Calu3 (cell line): ENCODE measurements at regions of chr2 and their contacts with region 1.

Region 1: DNA sequence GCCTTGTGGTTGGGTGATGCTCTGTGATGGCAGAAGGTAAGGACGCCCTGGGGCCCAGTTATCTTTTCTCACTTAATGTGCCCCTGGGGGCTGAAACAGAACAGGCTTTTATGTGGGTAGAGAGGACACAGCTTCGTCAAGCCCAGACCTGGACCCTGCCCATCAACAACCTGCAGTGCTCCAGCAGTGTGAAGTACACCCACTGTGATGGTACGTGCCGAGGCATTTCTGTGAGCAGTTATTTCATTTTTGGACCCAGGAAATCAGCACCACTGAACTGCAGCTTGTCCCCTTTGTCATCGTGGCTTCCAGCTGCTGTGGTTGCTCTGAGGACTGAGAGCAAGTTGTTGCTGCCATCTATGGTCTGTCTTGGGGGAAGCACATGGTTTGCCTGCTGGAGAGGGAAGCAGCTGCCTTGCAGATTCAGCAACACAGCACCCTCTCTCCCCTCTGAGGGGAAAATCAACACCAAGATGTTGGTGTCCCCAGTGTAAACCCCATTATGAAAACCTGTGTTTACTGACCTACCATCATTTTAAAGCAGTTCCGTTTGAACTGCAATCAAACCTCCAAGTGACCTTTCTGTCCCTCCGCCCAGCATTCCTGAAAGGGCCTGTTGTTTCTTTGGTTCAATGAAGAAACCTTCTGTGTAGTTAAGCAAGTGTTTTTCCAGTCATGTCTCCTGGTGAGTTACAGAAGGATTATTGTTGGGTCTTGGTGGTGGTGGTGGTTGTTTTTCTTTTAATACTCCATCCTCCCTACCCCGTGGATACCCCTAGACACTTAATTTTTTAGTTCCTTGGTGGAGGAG is 158.2 kb downstream of the MGAT5 start:
- DNase-seq: peak; percentile 82
- H3K4me3 Mint-ChIP-seq: peak overlapping the region; percentile 60
- H3K27ac Mint-ChIP-seq: peak overlapping the region; percentile 88
- H3K4me1 Mint-ChIP-seq: peaks cover 97% of the 10 kb centered on the region
- H3K27me3 Mint-ChIP-seq: no peaks in the 10 kb centered on the region
- CTCF ChIP-seq: peak; percentile 52

Region 2: DNA sequence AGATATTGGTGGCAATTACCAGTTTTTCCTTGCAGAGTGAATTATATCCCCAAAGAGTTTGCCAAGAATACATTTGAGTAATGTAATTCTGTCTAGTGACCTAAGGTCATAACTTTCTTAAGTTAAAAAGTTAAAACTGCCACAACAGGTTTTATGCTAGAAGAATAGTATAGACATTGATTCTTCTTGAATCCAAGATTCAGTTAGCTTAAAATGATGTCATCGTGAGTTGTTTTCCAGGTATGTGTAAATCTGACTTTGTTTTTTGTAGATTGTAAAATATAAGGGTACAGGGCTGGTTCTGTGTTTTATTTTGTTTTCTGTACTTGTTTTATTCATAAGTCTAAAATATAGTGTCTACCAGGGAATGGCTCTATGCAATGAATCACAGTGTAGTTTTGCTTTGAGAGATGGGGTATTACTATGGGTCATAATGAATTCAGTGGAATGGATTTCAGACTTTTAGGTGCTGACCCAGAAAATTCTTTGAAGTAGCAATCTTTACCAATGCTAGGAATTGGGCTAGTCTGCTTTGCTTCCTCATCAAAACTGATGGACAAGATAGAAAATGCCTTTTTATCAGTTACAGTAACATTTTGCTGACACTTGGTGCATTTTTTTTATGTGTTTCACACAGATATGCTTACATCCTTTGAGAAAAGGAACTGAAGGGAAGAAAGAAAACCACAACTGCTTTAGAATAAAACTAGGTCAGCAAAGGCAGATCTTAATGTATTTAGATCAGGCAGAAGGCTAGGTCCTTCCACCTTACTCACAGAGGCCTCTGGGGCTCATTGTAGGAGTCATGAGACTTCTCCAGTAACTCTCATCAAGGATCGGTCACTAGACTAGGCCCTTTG is 178.9 kb before region 1 on chr2:
- CTCF ChIA-PET with region 1: no interaction called
- intact Hi-C with region 1: loop called (anchors 5 kb)
- DNase-seq: no peak
- H3K4me3 Mint-ChIP-seq: peak overlapping the region; percentile 42
- H3K27ac Mint-ChIP-seq: peak overlapping the region; percentile 97
- H3K4me1 Mint-ChIP-seq: peaks cover 71% of the 10 kb centered on the region
- H3K27me3 Mint-ChIP-seq: no peaks in the 10 kb centered on the region
- CTCF ChIP-seq: no peak

Region 3: GRCh38 chr2:134245340-134245984 is 166.6 kb before region 1 on chr2:
- CTCF ChIA-PET with region 1: interaction called, 7 read pairs
- intact Hi-C with region 1: loop called (anchors 5 kb)
- DNase-seq: peak; percentile 86
- H3K4me3 Mint-ChIP-seq: no peak overlapping the region
- H3K27ac Mint-ChIP-seq: peak overlapping the region; percentile 79
- H3K4me1 Mint-ChIP-seq: peaks cover 43% of the 10 kb centered on the region
- H3K27me3 Mint-ChIP-seq: no peaks in the 10 kb centered on the region
- CTCF ChIP-seq: peak; percentile 75

Region 4: DNA sequence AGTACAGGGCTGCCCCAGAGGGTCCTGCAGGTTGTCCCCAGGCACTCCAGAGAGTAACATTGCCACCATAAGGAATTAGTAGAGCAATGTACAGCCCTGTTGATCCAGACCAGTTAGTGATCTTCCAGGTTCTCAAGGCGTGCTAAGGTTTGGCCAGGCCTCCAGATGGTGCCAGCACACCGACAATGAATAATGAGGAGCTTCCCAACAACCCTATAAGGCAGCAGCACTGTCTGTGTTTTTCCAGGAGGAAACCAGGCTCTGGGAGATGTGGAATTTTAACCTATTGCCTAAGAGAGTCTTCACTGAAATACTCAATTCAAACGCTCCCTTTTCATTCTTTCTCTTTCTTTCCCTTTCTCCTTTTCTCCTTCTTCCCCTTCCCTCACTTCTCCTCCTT is 36.1 kb before region 1 on chr2:
- CTCF ChIA-PET with region 1: interaction called, 11 read pairs
- intact Hi-C with region 1: no loop called
- DNase-seq: peak; percentile 25
- H3K4me3 Mint-ChIP-seq: no peak overlapping the region
- H3K27ac Mint-ChIP-seq: no peak overlapping the region
- H3K4me1 Mint-ChIP-seq: no peaks in the 10 kb centered on the region
- H3K27me3 Mint-ChIP-seq: no peaks in the 10 kb centered on the region
- CTCF ChIP-seq: no peak

Region 5: DNA sequence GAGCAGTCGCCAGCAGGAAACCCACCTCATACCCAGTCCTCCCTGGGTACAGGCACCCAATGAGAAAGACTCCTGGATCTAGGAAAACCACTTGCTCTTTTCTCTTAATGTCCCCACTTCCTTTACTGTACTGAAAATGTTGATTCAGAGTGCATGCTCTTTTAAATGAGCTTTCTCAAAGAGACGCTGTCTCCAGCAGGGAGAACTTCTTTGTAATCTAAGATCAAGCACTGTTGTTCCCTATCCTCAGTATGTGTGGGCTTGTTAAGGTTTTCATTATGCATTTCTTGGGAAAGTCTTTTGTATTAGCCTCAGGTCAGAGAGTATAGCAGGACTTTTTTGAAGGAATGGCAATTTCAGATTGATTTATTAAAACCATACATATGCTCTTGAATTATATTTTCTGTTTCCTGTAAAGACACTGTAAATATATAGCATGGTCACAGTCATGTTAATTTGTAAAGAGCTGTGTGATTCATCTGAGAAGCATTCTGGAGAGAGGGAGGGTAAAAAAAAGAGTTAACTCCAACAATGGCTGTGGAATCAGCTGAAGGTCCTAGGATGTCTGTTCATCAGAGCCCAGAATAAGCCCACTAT is 19.9 kb after region 1 on chr2:
- CTCF ChIA-PET with region 1: interaction called, 12 read pairs
- intact Hi-C with region 1: loop called (anchors 1 kb)
- DNase-seq: no peak
- H3K4me3 Mint-ChIP-seq: peak overlapping the region; percentile 46
- H3K27ac Mint-ChIP-seq: peak overlapping the region; percentile 82
- H3K4me1 Mint-ChIP-seq: peaks cover 51% of the 10 kb centered on the region
- H3K27me3 Mint-ChIP-seq: no peaks in the 10 kb centered on the region
- CTCF ChIP-seq: no peak

Region 6: DNA sequence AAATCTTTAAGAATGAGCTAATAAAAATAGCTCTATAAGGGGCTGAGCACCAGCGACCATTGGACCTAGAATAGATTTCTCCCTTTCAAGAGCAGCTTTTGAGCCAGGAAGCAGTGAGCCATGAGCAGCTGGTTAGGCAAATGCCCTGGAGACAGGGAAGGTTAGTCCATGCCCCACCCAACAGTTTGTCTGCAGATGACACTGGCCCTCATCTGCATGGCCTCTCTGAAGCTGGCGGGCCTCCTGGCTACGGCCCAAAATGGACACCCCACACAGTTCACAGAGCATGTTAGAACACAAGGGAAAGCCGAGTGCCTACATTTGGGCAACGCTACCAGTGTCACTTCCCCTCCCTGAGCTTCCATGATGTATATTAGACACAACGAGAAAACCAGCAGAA is 42.9 kb after region 1 on chr2:
- CTCF ChIA-PET with region 1: interaction called, 35 read pairs
- intact Hi-C with region 1: loop called (anchors 2 kb)
- DNase-seq: no peak
- H3K4me3 Mint-ChIP-seq: no peak overlapping the region
- H3K27ac Mint-ChIP-seq: no peak overlapping the region
- H3K4me1 Mint-ChIP-seq: peaks cover 13% of the 10 kb centered on the region
- H3K27me3 Mint-ChIP-seq: no peaks in the 10 kb centered on the region
- CTCF ChIP-seq: no peak

Region 7: GRCh38 chr2:134581877-134582546 is 170.0 kb after region 1 on chr2:
- CTCF ChIA-PET with region 1: no interaction called
- intact Hi-C with region 1: no loop called
- DNase-seq: no peak
- H3K4me3 Mint-ChIP-seq: no peak overlapping the region
- H3K27ac Mint-ChIP-seq: no peak overlapping the region
- H3K4me1 Mint-ChIP-seq: peaks cover 8% of the 10 kb centered on the region
- H3K27me3 Mint-ChIP-seq: no peaks in the 10 kb centered on the region
- CTCF ChIP-seq: no peak